Caco-2 (cell line): ENCODE measurements at regions of chr21 and their contacts with region 1.

Region 1: GRCh38 chr21:35039595-35040289 is 9.4 kb downstream of the RUNX1 start:
- DNase-seq: no peak
- H3K4me3 ChIP-seq: no peak overlapping the region
- H3K4me3 Mint-ChIP-seq: no peak overlapping the region
- H3K27ac Mint-ChIP-seq: no peak overlapping the region
- H3K4me1 ChIP-seq: peaks cover 19% of the 10 kb centered on the region
- H3K4me1 Mint-ChIP-seq: no peaks in the 10 kb centered on the region
- H3K27me3 ChIP-seq: no peaks in the 10 kb centered on the region
- H3K27me3 Mint-ChIP-seq: no peaks in the 10 kb centered on the region
- CTCF ChIP-seq: no peak

Region 2: DNA sequence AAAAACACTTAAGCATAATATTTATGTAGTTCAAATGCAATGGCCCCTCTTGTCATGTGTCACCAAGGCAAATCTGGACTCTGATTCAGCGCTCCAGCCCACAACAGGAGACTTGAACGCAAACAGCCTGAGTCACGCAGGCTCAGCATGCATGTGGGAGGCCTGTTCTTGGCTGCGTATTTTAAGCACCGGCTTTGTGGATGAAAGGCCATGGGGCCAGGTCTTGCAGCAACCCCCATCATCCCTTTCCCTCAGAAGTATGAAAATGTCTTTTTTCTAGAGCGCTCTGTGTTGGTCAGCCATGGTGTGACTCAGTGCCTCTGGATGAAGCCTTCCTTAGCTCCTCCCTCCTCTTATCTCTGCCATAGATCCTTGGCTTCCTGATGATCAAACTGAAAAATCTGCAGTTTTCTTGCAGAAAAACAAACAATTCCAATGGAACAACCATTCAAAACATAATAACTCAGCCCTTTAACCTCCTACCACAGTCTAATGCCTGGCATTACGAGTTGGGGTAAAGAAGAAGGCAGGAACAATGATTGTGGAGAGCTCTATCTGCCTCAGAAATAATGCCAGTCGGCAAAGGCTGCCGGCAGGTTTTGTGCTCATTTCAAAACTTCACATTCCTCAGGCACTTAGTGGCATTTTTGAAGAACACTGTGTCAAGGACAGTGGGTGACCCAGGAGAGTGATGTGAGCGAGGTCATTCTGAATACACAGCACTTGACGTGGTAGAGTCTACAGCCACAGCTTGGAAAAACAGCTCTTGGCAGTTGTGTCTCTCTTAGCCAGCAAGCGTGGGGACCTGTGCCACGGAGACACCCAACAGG is 203.4 kb before region 1 on chr21:
- CTCF ChIA-PET with region 1: no interaction called
- POLR2A ChIA-PET with region 1: no interaction called
- intact Hi-C with region 1: no loop called
- DNase-seq: no peak
- H3K4me3 ChIP-seq: no peak overlapping the region
- H3K4me3 Mint-ChIP-seq: no peak overlapping the region
- H3K27ac Mint-ChIP-seq: no peak overlapping the region
- H3K4me1 ChIP-seq: no peaks in the 10 kb centered on the region
- H3K4me1 Mint-ChIP-seq: no peaks in the 10 kb centered on the region
- H3K27me3 ChIP-seq: no peaks in the 10 kb centered on the region
- H3K27me3 Mint-ChIP-seq: no peaks in the 10 kb centered on the region
- CTCF ChIP-seq: no peak

Region 3: DNA sequence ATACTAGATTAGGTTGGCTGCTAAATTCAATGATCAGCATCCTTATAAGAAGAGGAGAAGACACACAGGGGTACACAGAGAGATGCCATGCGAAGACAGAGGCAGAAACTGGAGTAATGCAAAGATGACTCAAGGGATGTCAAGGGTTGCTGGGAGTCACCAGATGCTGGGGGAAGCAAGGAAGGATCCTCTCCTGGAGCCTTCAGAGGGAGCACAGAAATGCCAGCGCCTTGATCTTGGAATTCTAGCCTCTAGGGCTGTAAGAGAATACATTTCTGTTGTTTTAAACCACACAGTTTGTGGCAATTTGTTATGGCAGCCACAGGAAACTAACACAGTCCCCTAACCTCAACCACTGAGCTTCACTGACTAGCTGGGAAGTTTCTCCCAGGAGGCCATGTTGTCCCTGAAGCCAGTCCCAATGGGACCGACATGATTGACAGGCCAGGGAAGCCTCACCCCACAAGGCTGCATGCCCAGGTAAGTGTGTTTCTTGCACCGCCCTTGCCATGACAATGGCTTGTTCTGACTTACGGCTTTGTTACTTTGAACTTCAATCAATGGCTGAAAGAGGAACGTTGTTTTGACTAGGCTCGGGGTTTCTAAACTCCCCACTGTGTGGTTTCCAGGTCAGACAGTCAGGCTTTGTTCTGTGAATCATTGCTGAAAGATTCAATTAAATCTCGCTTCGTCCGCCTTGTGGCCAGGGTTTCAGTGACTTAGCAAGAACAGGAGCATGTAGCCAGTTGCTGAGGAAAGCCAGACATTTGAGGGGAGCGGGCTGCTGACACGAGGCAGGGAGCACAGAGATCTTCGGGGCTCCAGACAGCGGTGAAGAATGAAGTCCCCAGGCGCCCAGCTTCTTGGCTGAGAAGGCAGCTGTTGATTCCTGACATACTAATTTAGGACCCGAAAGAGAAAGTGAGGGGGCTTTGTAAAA is 52.9 kb before region 1 on chr21:
- CTCF ChIA-PET with region 1: no interaction called
- POLR2A ChIA-PET with region 1: no interaction called
- intact Hi-C with region 1: no loop called
- DNase-seq: no peak
- H3K4me3 ChIP-seq: no peak overlapping the region
- H3K4me3 Mint-ChIP-seq: no peak overlapping the region
- H3K27ac Mint-ChIP-seq: no peak overlapping the region
- H3K4me1 ChIP-seq: peaks cover 11% of the 10 kb centered on the region
- H3K4me1 Mint-ChIP-seq: peaks cover 13% of the 10 kb centered on the region
- H3K27me3 ChIP-seq: no peaks in the 10 kb centered on the region
- H3K27me3 Mint-ChIP-seq: no peaks in the 10 kb centered on the region
- CTCF ChIP-seq: no peak

Region 4: DNA sequence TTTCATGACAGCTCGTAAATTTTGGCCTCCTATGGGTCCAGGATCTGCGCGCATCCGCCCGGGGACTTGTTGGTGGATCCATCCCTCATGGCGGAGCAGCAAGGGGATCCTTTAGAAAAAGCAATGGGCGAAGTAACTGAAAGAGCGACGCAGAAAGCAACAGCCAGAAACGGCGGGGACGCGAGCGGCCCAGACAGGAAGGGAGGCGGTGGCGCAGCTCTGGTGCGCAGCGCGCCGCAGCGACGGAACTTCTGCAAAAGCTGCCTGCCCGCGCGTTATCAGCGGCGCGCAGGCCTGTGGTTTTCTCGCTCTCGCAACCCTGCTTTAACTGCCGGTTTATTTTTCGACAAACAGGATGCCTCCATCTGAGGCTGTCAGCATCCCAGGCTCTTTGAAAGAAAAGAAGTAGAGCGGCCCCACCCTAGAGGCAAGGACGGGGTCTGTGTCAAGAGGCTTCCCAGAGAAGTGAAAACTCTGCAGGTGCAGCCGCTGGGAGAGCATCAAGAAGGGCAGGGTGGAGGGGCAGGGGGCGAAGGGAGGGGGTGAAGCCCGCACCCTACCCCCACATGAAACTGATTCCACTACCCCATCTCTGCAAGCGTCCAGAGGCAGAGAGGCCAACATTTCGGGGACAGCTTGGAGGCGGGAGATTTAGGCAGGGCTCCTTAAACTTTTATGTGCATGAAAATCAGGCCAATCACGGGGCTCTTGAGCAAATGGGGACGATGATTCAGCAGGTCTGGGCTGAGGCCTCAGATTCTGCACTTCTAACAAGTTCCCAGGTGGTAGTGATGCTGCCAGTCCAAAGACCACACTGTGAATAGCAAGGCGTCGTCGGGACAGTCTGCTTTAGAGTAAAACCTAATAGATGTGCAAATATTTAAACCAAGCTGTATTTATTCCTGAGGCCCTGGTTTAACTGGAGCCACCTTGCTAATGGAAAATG is 12.9 kb before region 1 on chr21:
- CTCF ChIA-PET with region 1: no interaction called
- POLR2A ChIA-PET with region 1: no interaction called
- intact Hi-C with region 1: loop called (anchors 1 kb)
- DNase-seq: peak; percentile 72 to 83
- H3K4me3 ChIP-seq: no peak overlapping the region
- H3K4me3 Mint-ChIP-seq: peak overlapping the region; percentile 65
- H3K27ac Mint-ChIP-seq: peak overlapping the region; percentile 87
- H3K4me1 ChIP-seq: peaks cover 44% of the 10 kb centered on the region
- H3K4me1 Mint-ChIP-seq: peaks cover 11% of the 10 kb centered on the region
- H3K27me3 ChIP-seq: no peaks in the 10 kb centered on the region
- H3K27me3 Mint-ChIP-seq: no peaks in the 10 kb centered on the region
- CTCF ChIP-seq: no peak

Region 5: DNA sequence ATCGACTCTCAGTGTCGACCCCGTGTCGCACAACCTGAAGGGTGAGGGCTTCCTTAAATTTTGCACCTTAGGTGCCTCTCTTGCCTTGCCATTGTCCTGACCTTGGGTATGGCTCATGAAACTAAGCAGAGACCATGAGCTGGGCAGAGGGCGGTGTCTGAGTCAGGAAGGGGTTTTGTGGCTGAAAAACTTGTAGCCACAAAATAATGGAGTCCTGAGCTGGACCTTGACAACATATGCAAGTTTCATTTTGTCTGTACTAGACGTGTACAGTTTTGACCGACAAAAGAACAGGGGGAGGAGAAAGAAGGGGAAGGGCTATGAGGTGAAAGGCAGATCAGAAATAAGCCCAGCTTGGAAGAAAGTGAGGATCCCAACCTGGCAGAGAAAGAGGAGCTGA is 17.7 kb after region 1 on chr21:
- CTCF ChIA-PET with region 1: no interaction called
- POLR2A ChIA-PET with region 1: no interaction called
- intact Hi-C with region 1: no loop called
- DNase-seq: no peak
- H3K4me3 ChIP-seq: no peak overlapping the region
- H3K4me3 Mint-ChIP-seq: no peak overlapping the region
- H3K27ac Mint-ChIP-seq: no peak overlapping the region
- H3K4me1 ChIP-seq: no peaks in the 10 kb centered on the region
- H3K4me1 Mint-ChIP-seq: no peaks in the 10 kb centered on the region
- H3K27me3 ChIP-seq: no peaks in the 10 kb centered on the region
- H3K27me3 Mint-ChIP-seq: peaks cover 3% of the 10 kb centered on the region
- CTCF ChIP-seq: no peak

Region 6: DNA sequence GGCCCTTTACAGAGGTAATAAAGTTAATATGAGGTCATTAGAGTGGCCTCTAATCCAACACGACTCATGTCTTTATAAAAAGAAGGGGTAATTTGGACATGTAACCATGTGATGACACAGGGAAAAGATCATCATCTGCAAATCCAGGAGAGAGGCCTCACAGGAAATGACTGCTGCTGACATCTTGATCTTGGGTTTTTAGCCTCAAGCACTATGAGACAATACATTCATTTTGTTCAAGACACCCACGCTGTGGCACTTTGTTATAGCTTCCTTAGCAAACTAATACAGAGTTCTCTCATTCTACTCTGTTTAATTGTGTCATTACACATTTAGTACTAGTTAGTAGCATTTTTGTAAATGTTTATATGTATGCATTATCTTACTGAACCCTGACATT is 73.3 kb after region 1 on chr21:
- CTCF ChIA-PET with region 1: no interaction called
- POLR2A ChIA-PET with region 1: no interaction called
- intact Hi-C with region 1: no loop called
- DNase-seq: no peak
- H3K4me3 ChIP-seq: no peak overlapping the region
- H3K4me3 Mint-ChIP-seq: no peak overlapping the region
- H3K27ac Mint-ChIP-seq: no peak overlapping the region
- H3K4me1 ChIP-seq: no peaks in the 10 kb centered on the region
- H3K4me1 Mint-ChIP-seq: no peaks in the 10 kb centered on the region
- H3K27me3 ChIP-seq: no peaks in the 10 kb centered on the region
- H3K27me3 Mint-ChIP-seq: peaks cover 2% of the 10 kb centered on the region
- CTCF ChIP-seq: no peak